Activated B cell treated with CpG ODN at 0.5 μM for 24 hours (primary cell): ENCODE measurements at regions of chr10 and their contacts with region 1.

Region 1: GRCh38 chr10:73625884-73626752 is 15.2 kb downstream of the MYOZ1 start:
- DNase-seq: peak; percentile 78
- ATAC-seq: peak; percentile 94
- H3K4me3 Mint-ChIP-seq: peak overlapping the region; percentile 99
- H3K27ac Mint-ChIP-seq: peak overlapping the region; percentile 98
- H3K4me1 Mint-ChIP-seq: peaks cover 24% of the 10 kb centered on the region
- H3K27me3 Mint-ChIP-seq: no peaks in the 10 kb centered on the region
- CTCF ChIP-seq: no peak

Region 2: GRCh38 chr10:73246783-73247508 is 379.2 kb before region 1 on chr10 and contains the start of gene DNAJC9:
- CTCF ChIA-PET with region 1: no interaction called
- POLR2A ChIA-PET with region 1: interaction called, 6 read pairs
- intact Hi-C with region 1: loop called (anchors 1 kb)
- DNase-seq: peak; percentile 99
- ATAC-seq: peak; percentile 84
- H3K4me3 Mint-ChIP-seq: peak within 1 kb of the TSS; percentile 93
- H3K27ac Mint-ChIP-seq: peak within 1 kb of the TSS; percentile 93
- H3K4me1 Mint-ChIP-seq: peaks cover 56% of the 10 kb centered on the region
- H3K27me3 Mint-ChIP-seq: no peaks in the 10 kb centered on the region
- CTCF ChIP-seq: no peak
- total RNA-seq, gene DNAJC9: 22.8 and 24.4 TPM in 2 replicates

Region 3: GRCh38 chr10:73495884-73496674 is 130.0 kb before region 1 on chr10 and contains the start of gene PPP3CB:
- CTCF ChIA-PET with region 1: no interaction called
- POLR2A ChIA-PET with region 1: interaction called, 16 read pairs
- intact Hi-C with region 1: loop called (anchors 1 kb)
- DNase-seq: no peak
- ATAC-seq: peak; percentile 73
- H3K4me3 Mint-ChIP-seq: peak within 1 kb of the TSS; percentile 92
- H3K27ac Mint-ChIP-seq: peak within 1 kb of the TSS; percentile 96
- H3K4me1 Mint-ChIP-seq: peaks cover 52% of the 10 kb centered on the region
- H3K27me3 Mint-ChIP-seq: no peaks in the 10 kb centered on the region
- CTCF ChIP-seq: no peak
- total RNA-seq, gene PPP3CB: 41.4 and 43.3 TPM in 2 replicates

Region 4: GRCh38 chr10:73609116-73609515 is 17.0 kb before region 1 on chr10:
- CTCF ChIA-PET with region 1: no interaction called
- POLR2A ChIA-PET with region 1: no interaction called
- intact Hi-C with region 1: no loop called
- DNase-seq: no peak
- ATAC-seq: no peak
- H3K4me3 Mint-ChIP-seq: no peak overlapping the region
- H3K27ac Mint-ChIP-seq: no peak overlapping the region
- H3K4me1 Mint-ChIP-seq: no peaks in the 10 kb centered on the region
- H3K27me3 Mint-ChIP-seq: no peaks in the 10 kb centered on the region
- CTCF ChIP-seq: no peak

Region 5: DNA sequence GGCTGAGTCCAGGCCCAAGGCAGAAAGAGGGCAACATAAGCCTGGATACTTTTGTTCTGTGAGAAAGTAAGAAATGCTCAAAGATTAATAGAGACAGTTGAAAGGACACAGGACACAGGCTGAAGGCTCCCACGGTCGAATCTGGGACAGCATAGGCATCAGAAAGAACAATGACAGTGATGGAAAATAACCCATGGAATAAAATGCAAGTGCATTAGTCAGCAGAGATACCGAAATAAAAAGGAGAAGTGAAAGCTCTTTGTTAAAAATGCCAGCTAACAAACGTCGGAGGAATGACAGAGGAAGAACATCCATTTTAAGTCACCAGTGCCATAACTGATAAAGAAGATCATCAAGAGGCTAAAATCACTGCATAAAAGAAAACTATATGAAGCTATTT is 91.4 kb after region 1 on chr10:
- CTCF ChIA-PET with region 1: no interaction called
- POLR2A ChIA-PET with region 1: interaction called, 3 read pairs
- intact Hi-C with region 1: loop called (anchors 2 kb)
- DNase-seq: no peak
- ATAC-seq: peak; percentile 72
- H3K4me3 Mint-ChIP-seq: no peak overlapping the region
- H3K27ac Mint-ChIP-seq: peak overlapping the region; percentile 76
- H3K4me1 Mint-ChIP-seq: peaks cover 12% of the 10 kb centered on the region
- H3K27me3 Mint-ChIP-seq: no peaks in the 10 kb centered on the region
- CTCF ChIP-seq: no peak

Region 6: DNA sequence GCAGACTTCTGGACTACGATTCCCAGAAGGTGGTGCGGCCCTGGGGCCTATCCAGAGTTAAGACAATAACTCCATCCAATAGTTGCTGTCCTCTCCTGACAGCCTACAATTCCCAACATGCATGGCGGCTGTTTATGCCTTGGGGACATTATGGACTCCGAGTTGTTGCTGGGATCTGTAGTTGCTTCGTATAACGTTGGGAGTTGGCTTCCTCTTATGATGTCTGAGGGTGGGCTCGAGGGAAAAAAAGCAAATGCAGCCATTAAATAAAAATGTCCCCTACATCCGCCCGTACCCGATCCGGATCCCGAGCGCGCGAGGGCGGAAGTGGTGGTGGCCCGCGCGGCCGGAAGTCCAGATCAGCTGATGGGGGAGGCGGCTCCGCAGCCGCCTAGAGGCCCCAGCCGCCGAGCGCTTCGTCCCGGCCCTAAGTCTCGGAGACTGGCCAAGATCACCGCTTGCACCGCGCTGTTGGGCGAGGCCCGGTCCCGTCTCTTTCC is 159.2 kb after region 1 on chr10 and contains the start of gene ZSWIM8:
- CTCF ChIA-PET with region 1: no interaction called
- POLR2A ChIA-PET with region 1: no interaction called
- intact Hi-C with region 1: loop called (anchors 1 kb)
- DNase-seq: peak; percentile 78
- ATAC-seq: peak; percentile 88
- H3K4me3 Mint-ChIP-seq: peak within 1 kb of the TSS; percentile 99
- H3K27ac Mint-ChIP-seq: peak within 1 kb of the TSS; percentile 98
- H3K4me1 Mint-ChIP-seq: peaks cover 57% of the 10 kb centered on the region
- H3K27me3 Mint-ChIP-seq: no peaks in the 10 kb centered on the region
- CTCF ChIP-seq: no peak
- total RNA-seq, gene ZSWIM8: 67.5 and 93.0 TPM in 2 replicates